Activated CD4-positive, alpha-beta T cell treated with anti-CD3 and anti-CD28 coated beads for 36 hours (primary cell): ENCODE measurements at regions of chr16 and their contacts with region 1.

Region 1: DNA sequence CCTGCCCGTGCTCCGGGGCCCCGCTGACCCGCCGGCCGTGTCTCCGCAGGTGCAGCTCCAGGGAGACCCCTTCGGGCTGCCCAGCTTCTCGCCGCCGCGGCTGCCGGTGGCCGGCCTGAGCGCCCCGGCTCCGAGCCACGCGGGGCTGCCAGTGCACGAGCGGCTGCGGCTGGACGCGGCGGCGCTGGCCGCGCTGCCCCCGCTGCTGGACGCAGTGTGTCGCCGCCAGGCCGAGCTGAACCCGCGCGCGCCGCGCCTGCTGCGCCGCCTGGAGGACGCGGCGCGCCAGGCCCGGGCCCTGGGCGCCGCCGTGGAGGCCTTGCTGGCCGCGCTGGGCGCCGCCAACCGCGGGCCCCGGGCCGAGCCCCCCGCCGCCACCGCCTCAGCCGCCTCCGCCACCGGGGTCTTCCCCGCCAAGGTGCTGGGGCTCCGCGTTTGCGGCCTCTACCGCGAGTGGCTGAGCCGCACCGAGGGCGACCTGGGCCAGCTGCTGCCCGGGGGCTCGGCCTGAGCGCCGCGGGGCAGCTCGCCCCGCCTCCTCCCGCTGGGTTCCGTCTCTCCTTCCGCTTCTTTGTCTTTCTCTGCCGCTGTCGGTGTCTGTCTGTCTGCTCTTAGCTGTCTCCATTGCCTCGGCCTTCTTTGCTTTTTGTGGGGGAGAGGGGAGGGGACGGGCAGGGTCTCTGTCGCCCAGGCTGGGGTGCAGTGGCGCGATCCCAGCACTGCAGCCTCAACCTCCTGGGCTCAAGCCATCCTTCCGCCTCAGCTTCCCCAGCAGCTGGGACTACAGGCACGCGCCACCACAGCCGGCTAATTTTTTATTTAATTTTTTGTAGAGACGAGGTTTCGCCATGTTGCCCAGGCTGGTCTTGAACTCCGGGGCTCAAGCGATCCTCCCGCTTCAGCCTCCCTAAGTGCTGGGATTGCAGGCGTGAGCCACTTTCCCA is 5.9 kb downstream of the CTF1 start:
- DNase-seq: peak; percentile 77
- ATAC-seq: peak; percentile 87
- H3K4me3 Mint-ChIP-seq: peak overlapping the region; percentile 80
- H3K27ac Mint-ChIP-seq: peak overlapping the region; percentile 99
- H3K4me1 Mint-ChIP-seq: peaks cover 25% of the 10 kb centered on the region
- H3K27me3 Mint-ChIP-seq: no peaks in the 10 kb centered on the region

Region 2: GRCh38 chr16:30853758-30854157 is 48.5 kb before region 1 on chr16:
- CTCF ChIA-PET with region 1: interaction called, 12 read pairs
- POLR2A ChIA-PET with region 1: interaction called, 6 read pairs
- intact Hi-C with region 1: no loop called
- DNase-seq: no peak
- ATAC-seq: no peak
- H3K4me3 Mint-ChIP-seq: no peak overlapping the region
- H3K27ac Mint-ChIP-seq: no peak overlapping the region
- H3K4me1 Mint-ChIP-seq: no peaks in the 10 kb centered on the region
- H3K27me3 Mint-ChIP-seq: no peaks in the 10 kb centered on the region

Region 3: GRCh38 chr16:30874821-30875717 is 27.2 kb before region 1 on chr16:
- CTCF ChIA-PET with region 1: interaction called, 13 read pairs
- POLR2A ChIA-PET with region 1: interaction called, 6 read pairs
- intact Hi-C with region 1: loop called (anchors 1 to 2 kb)
- DNase-seq: peak; percentile 94
- ATAC-seq: peak; percentile 82
- H3K4me3 Mint-ChIP-seq: peak overlapping the region; percentile 87
- H3K27ac Mint-ChIP-seq: peak overlapping the region; percentile 93
- H3K4me1 Mint-ChIP-seq: peaks cover 24% of the 10 kb centered on the region
- H3K27me3 Mint-ChIP-seq: no peaks in the 10 kb centered on the region

Region 4: GRCh38 chr16:30914830-30915229 is 12.5 kb after region 1 on chr16:
- CTCF ChIA-PET with region 1: interaction called, 12 read pairs
- POLR2A ChIA-PET with region 1: no interaction called
- intact Hi-C with region 1: no loop called
- DNase-seq: no peak
- ATAC-seq: no peak
- H3K4me3 Mint-ChIP-seq: no peak overlapping the region
- H3K27ac Mint-ChIP-seq: no peak overlapping the region
- H3K4me1 Mint-ChIP-seq: no peaks in the 10 kb centered on the region
- H3K27me3 Mint-ChIP-seq: no peaks in the 10 kb centered on the region

Region 5: GRCh38 chr16:30941600-30942425 is 39.5 kb after region 1 on chr16:
- CTCF ChIA-PET with region 1: interaction called, 10 read pairs
- POLR2A ChIA-PET with region 1: no interaction called
- intact Hi-C with region 1: no loop called
- DNase-seq: peak; percentile 83
- ATAC-seq: peak; percentile 94
- H3K4me3 Mint-ChIP-seq: peak overlapping the region; percentile 35
- H3K27ac Mint-ChIP-seq: peak overlapping the region; percentile 78
- H3K4me1 Mint-ChIP-seq: peaks cover 19% of the 10 kb centered on the region
- H3K27me3 Mint-ChIP-seq: no peaks in the 10 kb centered on the region

Region 6: GRCh38 chr16:30997000-30997886 is 94.9 kb after region 1 on chr16:
- CTCF ChIA-PET with region 1: no interaction called
- POLR2A ChIA-PET with region 1: no interaction called
- intact Hi-C with region 1: no loop called
- DNase-seq: peak; percentile 94
- ATAC-seq: peak; percentile 95
- H3K4me3 Mint-ChIP-seq: peak overlapping the region; percentile 72
- H3K27ac Mint-ChIP-seq: no peak overlapping the region
- H3K4me1 Mint-ChIP-seq: peaks cover 16% of the 10 kb centered on the region
- H3K27me3 Mint-ChIP-seq: peaks cover 3% of the 10 kb centered on the region